Breast epithelium (tissue), 4 donors: ENCODE measurements at regions of chr2 and their contacts with region 1.

Region 1: DNA sequence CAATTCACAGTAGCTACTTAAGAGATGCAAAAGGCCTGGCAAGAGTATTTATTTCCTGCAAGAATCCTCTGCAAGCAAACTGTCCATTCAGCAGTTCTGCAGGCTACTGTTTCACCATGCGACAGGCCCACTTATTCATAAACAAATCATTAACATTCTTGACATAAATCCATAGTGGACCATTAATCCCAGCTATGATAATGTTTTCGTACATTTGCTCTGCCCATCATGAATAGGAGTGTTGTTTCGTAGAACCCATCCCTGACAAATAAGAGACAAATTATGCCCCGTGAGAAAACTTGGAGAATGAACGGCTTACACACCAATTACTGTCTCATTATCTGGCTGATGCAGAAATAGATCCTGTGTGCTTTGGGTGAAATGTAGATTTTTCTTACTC is 65.4 kb downstream of the PID1 start:
- DNase-seq: no peak
- H3K4me3 ChIP-seq: no peak overlapping the region
- H3K27ac ChIP-seq: no peak overlapping the region
- H3K4me1 ChIP-seq: no peaks in the 10 kb centered on the region
- H3K27me3 ChIP-seq: no peaks in the 10 kb centered on the region
- CTCF ChIP-seq: no peak
- POLR2A ChIP-seq: no peak

Region 2: GRCh38 chr2:229180658-229181057 is 25.0 kb before region 1 on chr2:
- intact Hi-C with region 1: loop called (anchors 1 kb)
- DNase-seq: no peak
- H3K4me3 ChIP-seq: no peak overlapping the region
- H3K27ac ChIP-seq: no peak overlapping the region
- H3K4me1 ChIP-seq: no peaks in the 10 kb centered on the region
- H3K27me3 ChIP-seq: no peaks in the 10 kb centered on the region
- CTCF ChIP-seq: no peak
- POLR2A ChIP-seq: no peak